Activated T-helper 1 cell treated with anti-CD3 and anti-CD28 coated beads, Interleukin-12 subunit alpha, Interleukin-12 subunit beta, Interleukin-2, Interleukin-4 antibody, amounts not matched to agents 30 ng/mL and 10 ng/mL and 1 ng/mL, durations not matched to agents 14 hours and 24 hours and 36 hours (primary cell): ENCODE measurements at regions of chr12 and their contacts with region 1.

Region 1: DNA sequence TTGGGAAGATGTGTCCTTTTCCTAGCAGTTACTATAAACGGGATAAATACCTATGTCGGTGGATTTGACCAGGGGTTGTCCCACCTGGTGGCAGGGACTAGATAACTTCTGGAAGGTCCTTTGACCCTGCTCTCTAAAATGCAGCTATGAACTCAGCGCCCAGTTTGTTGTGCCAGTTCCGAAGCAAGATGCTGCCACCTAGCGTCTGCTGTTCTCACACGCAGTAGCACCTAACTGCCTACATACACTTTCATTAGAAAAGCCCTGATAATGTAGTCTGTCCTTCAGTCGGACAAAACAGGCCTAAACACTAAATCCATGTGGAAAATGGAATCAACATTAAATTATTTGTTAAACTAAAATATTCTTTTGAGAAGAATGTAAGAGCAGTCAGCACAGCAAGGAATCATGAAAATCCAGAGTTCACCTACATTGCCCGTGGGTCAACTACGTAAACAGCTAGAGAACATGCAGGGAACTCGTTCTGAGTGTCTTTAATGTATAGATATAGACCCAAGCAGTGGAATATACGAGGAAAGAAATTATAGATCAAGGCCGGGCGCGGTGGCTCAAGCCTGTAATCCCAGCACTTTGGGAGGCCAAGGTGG is 51.1 kb upstream of the CRACR2A start:
- DNase-seq: peak; percentile 49
- H3K4me3 Mint-ChIP-seq: no peak overlapping the region
- H3K27ac Mint-ChIP-seq: no peak overlapping the region
- H3K4me1 Mint-ChIP-seq: no peaks in the 10 kb centered on the region
- H3K27me3 Mint-ChIP-seq: no peaks in the 10 kb centered on the region

Region 2: DNA sequence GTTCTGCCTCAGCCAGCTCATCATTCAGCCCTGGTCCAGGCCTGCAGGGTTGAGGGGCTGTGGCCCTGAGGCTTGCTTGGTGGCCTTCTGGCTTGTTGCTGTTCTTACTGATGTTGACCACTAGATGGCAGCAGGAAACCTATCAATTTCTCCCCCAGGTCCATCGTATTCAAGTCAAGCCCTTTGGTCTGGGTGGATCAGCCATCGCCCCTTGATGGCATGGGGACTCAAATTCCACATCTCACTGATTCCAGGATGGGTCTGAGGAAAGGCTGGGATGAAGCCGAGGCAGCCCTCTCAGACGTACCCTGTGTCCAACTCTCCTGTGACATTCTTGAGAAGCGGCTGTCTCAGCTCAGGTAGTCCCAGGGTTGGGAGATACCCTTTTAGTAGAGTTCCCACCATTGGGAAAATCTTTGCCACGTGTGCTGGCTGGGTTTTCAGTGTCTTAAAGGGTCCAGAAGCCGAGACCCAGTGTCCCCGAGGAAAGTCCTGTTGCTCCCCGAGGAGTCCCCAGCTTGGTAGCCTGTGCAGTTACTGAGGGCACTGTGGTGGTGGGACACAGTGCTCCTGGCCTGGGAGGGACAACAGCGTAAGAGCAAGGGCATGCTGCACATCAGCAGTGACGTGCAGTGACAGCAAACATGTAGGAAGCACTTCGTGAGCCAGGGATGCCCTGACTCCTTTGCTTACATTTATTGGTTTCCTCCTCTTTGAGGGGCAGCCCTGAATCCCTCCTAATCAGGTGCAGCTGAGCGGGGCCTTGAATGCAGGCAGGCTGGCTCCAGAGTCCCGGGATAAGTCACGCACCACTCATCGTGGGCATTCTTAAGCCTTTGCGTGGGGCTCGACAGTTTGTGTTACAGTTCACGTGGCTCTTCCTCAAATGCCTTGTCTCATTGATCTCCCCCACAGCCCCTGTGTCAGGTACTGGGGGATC is 668.2 kb before region 1 on chr12:
- intact Hi-C with region 1: loop called (anchors 1 kb)
- DNase-seq: peak; percentile 15
- H3K4me3 Mint-ChIP-seq: no peak overlapping the region
- H3K27ac Mint-ChIP-seq: no peak overlapping the region
- H3K4me1 Mint-ChIP-seq: no peaks in the 10 kb centered on the region
- H3K27me3 Mint-ChIP-seq: peaks cover 29% of the 10 kb centered on the region

Region 3: DNA sequence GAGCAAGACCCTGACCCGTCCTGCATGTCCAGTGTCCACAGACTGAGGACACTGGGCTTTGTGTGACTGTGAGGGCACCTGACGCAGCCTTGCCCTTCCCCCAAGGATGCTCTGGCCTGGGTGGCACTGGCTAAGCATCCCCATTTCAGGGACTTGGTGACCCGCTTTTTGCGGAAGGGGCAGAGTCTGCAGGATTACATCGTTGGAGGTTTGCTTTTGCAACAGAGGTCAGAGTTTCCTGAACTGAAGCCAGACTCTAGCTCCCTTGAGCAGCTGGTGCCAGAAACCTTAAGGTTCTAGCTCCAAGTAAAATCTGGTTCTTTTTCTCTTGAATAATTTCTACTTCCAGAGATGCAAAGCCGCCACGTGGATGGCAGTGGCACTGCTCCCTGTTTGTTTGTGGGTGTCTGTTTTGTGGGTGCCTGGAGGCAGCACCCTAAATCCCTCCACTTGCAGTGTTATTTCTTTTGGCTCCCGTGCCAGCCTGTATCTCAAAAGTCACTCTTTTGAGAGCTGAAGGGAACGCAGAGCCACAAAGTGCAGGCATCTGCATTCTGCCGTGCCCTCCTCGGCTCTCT is 542.1 kb before region 1 on chr12:
- intact Hi-C with region 1: no loop called
- DNase-seq: no peak
- H3K4me3 Mint-ChIP-seq: no peak overlapping the region
- H3K27ac Mint-ChIP-seq: no peak overlapping the region
- H3K4me1 Mint-ChIP-seq: no peaks in the 10 kb centered on the region
- H3K27me3 Mint-ChIP-seq: no peaks in the 10 kb centered on the region

Region 4: DNA sequence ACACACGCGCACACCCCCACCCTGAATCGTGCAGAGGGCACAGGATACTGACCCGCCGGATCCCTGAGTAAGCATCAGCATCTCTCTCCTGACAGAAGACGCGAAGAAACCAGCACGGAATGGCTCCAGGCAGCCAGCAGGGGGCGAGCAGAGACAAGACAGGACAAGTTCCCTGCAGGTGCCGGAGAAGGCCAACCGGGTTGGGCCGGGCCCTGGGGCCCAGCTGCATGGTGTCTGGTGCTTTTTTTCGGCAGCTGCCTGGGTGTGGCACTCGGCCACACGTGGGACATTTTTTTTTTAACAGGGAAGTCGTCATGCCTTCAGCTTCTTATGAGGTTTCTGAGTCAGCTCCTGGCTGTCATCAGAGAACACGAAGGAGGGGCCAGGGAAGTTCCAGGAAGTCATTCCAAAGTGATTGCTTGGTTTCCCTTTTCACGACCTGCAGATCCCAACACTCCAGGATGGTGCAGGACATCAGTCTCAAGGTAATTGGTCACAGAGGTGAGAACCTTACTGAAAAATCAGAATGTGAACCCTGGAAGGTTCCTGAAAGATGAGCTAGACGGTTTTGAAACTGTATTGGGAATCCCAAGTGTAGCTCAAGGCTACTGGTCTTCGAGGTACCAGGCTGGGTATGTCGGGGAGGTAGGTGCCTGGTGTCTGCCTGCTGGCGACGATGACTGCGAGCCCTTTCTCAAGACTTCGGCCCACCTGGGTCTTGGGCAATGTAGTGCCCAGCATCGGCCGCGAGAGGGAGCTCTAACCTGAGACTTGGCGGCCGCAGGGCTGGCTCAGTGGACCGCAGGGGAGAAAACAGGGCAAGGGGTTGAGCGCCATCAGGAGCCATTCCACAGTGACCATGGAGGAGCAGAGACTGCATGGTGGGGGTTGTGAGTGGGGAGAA is 503.8 kb before region 1 on chr12:
- intact Hi-C with region 1: loop called (anchors 1 kb)
- DNase-seq: peak; percentile 72
- H3K4me3 Mint-ChIP-seq: peak overlapping the region; percentile 38
- H3K27ac Mint-ChIP-seq: peak overlapping the region; percentile 74
- H3K4me1 Mint-ChIP-seq: peaks cover 14% of the 10 kb centered on the region
- H3K27me3 Mint-ChIP-seq: peaks cover 12% of the 10 kb centered on the region

Region 5: DNA sequence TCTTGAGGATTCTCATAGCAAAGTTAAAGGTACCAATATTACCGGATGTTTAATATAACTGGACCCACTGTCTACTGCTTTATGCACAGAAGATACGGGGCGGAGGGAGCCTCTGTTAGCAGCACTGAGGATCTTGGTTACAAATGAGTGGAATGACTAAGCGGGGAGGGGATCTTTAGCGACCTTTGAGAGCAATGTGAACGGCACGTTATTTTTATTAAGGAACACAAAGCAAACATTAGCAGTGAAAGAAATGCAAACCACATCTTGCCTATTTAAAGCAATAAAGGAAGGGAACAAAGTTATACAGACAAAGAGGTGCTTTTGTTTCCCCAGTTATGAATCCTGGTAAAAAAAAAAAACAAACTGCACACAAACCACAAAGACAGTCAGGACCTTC is 340.0 kb before region 1 on chr12:
- intact Hi-C with region 1: loop called (anchors 10 kb)
- DNase-seq: no peak
- H3K4me3 Mint-ChIP-seq: no peak overlapping the region
- H3K27ac Mint-ChIP-seq: no peak overlapping the region
- H3K4me1 Mint-ChIP-seq: no peaks in the 10 kb centered on the region
- H3K27me3 Mint-ChIP-seq: peaks cover 21% of the 10 kb centered on the region

Region 6: DNA sequence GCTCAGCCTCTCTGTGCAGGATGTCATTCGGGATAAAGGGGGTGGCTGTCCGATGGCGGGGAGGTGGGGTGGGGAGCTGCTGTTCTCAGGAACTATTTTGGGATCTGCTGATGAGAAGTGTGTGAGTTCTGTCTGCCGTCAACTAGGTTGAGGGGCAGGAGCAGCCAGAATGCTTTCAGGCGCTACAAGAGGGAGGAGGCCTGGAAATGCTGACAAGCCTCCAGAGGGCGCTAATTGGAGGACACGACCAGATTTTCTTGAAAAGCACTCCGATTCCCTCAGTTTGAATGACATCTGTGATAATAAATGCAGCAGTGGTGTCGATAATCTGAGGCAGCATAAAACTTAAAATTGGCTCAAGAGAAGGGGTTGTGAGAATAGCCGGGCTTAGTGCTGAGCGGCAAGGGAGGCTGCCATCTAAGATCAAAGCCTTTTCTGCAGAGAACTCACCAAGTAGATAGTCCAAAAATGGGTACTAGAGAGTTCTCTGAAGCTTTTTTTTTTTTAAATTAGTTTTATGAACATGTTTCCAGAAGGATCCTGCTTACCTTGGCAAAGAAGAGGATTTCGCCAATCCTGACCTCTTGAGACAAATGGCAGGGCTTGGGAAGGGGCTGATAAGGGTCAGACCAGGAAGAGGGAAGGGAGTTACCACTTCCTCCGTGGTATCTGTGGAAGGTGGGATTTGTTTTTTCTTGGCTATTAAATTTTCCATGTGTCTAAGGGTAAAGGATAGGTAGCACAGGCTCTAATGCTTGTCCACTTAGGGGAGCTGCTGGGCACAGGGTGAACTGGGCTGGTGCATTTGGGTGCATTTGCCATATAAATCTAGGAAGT is 145.4 kb before region 1 on chr12:
- intact Hi-C with region 1: loop called (anchors 1 kb)
- DNase-seq: no peak
- H3K4me3 Mint-ChIP-seq: no peak overlapping the region
- H3K27ac Mint-ChIP-seq: peak overlapping the region; percentile 13
- H3K4me1 Mint-ChIP-seq: no peaks in the 10 kb centered on the region
- H3K27me3 Mint-ChIP-seq: no peaks in the 10 kb centered on the region

Region 7: GRCh38 chr12:3951380-3952135 is 147.6 kb after region 1 on chr12:
- intact Hi-C with region 1: no loop called
- DNase-seq: no peak
- H3K4me3 Mint-ChIP-seq: no peak overlapping the region
- H3K27ac Mint-ChIP-seq: no peak overlapping the region
- H3K4me1 Mint-ChIP-seq: peaks cover 48% of the 10 kb centered on the region
- H3K27me3 Mint-ChIP-seq: no peaks in the 10 kb centered on the region